GM12878 (cell line): ENCODE measurements at regions of chr7 and their contacts with region 1.

Region 1: DNA sequence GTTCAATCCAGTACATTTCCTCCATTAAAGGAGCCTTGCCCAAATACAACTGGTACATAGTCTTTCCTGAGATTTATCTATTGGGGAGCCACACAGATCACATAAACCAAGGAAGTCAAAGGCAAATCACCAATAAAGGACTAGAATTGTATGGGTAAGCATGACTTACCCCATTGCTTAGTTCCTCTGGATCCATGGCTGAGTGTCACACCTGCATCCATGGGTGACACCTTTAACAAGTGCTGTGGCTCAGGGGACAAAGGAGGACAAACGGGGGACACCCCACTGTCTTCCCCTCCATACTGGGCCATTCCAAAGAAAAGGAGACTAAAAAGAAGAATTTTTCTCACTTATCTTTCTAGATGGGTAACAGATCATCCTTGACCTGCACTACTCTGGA is 30.4 kb downstream of the ZNF92 start:
- DNase-seq: no peak
- ATAC-seq: no peak
- H3K4me3 ChIP-seq: no peak overlapping the region
- H3K27ac ChIP-seq: no peak overlapping the region
- H3K4me1 ChIP-seq: no peaks in the 10 kb centered on the region
- H3K27me3 ChIP-seq: no peaks in the 10 kb centered on the region
- CTCF ChIP-seq: no peak
- EP300 ChIP-seq: no peak
- POLR2A ChIP-seq: no peak
- RAD21 ChIP-seq: no peak

Region 2: DNA sequence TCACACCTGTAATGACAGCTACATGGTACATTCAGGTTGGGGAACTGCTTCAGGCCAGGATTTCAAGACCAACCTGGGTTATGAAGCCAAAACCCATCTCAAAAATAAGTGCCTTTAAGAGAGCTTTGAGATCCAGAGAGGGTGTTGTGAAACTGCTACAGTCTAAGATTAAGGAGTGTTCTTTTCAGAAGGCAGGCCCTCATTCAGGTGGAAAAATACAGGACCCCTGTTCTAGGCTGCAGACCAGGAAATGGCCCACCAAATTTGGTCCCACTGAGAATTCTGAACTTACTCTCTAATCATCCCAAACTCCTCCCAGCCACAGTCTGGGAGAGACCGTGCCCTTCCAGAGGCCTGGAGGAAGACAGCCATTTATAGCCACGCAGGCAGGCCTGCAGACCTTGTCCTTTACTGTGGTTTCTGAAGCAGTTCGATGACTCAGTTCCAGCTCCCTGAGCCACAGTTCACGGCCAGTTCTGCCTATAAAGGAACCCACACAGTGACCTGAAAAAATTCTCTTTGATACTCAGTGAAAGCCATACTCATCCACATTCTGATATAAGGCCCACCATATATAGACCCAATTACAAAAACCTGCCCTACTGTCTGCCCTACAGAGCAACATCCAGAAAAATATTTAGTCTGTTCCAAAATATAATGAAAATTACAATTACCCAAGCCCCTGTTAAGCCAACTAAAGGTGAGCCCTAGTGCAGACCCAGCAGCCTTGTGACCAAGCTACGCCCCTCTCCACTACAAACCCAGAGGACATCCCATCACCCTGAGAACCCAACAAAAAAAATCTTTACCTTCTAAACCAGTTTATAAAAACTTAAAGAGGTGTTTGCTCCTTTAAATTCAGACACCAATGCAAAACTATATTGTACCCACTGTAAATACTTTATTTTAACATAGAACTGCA is 862.3 kb before region 1 on chr7:
- CTCF ChIA-PET with region 1: no interaction called
- POLR2A ChIA-PET with region 1: no interaction called
- RAD21 ChIA-PET with region 1: no interaction called
- SMC1A ChIA-PET with region 1: no interaction called
- in situ Hi-C with region 1: loop called (anchors 25 kb)
- intact Hi-C with region 1: no loop called
- DNase-seq: no peak
- ATAC-seq: peak; percentile 66
- H3K4me3 ChIP-seq: no peak overlapping the region
- H3K27ac ChIP-seq: no peak overlapping the region
- H3K4me1 ChIP-seq: no peaks in the 10 kb centered on the region
- H3K27me3 ChIP-seq: no peaks in the 10 kb centered on the region
- CTCF ChIP-seq: no peak
- EP300 ChIP-seq: no peak
- POLR2A ChIP-seq: no peak
- RAD21 ChIP-seq: no peak